Heart right ventricle (tissue), 16 donors: ENCODE measurements at regions of chr15 and their contacts with region 1.

Region 1: GRCh38 chr15:85380217-85380811 is at the start of gene AKAP13:
- DNase-seq: peak; percentile 97 to 98
- ATAC-seq: peak; percentile 90 to 98 (median 95)
- H3K4me3 ChIP-seq: peak within 1 kb of the TSS; percentile 80 to 97 (median 92)
- H3K27ac ChIP-seq: peak within 1 kb of the TSS; percentile 91 to 96 (median 94)
- H3K4me1 ChIP-seq: peaks cover 0 to 48% (median 28%) of the 10 kb centered on the region in 9 donors
- H3K27me3 ChIP-seq: no peaks in the 10 kb centered on the region
- CTCF ChIP-seq: no peak
- total RNA-seq, gene AKAP13: 325 to 645 (median 537) TPM

Region 2: GRCh38 chr15:85337425-85338074 is 42.8 kb before region 1 on chr15:
- intact Hi-C with region 1: loop called in 3 of 10 experiments (anchors 5 kb)
- DNase-seq: peak in 1 of 2 donors; percentile 48
- ATAC-seq: peak; percentile 13 to 76 (median 50)
- H3K4me3 ChIP-seq: peak overlapping the region in 2 of 10 donors; percentile 8 to 9
- H3K27ac ChIP-seq: peak overlapping the region; percentile 59 to 93 (median 87)
- H3K4me1 ChIP-seq: peaks cover 18 to 58% (median 45%) of the 10 kb centered on the region in 9 donors
- H3K27me3 ChIP-seq: no peaks in the 10 kb centered on the region
- CTCF ChIP-seq: no peak

Region 3: DNA sequence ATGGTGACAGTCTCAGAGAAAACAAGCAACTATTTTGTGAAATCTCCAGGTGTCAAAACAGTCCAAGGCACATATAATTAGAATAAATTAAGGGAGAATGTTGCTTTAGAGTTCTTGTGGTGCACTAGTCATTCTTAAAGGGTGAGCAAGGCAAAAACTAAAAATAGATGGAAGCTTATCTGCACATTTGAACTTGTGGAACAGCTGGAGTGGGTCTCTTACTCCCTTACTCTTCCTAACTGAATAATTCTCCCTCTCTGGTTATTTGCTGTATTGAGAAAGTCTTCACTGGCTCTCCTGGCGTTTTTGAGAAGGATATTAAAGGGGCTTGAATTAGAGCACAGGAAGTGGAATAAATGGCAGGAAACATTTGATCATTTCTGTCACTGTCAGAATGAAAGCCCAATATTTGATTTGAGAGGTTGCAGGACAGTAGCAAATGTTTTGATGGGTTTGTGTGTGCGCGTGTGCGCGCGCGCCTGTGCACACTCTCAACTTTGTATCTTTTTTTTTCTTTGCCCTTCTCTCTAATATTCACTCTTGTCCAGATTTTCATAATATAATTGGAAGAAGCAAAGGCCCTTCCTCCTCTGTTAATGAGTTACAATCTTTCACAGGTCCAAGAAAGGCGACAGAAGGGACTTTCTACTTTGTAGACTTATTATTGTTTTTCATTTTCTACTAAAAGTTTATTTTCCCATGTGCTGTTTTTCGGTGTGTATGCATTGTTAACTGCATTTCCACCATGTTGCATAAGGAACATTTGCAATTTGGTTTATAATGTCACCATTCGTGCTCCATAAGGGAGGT is 41.0 kb after region 1 on chr15:
- intact Hi-C with region 1: no loop called
- DNase-seq: no peak
- ATAC-seq: peak; percentile 26 to 70 (median 66)
- H3K4me3 ChIP-seq: no peak overlapping the region
- H3K27ac ChIP-seq: peak overlapping the region in 8 of 10 donors; percentile 1 to 64 (median 50)
- H3K4me1 ChIP-seq: peaks cover 4 to 94% (median 62%) of the 10 kb centered on the region in 9 donors
- H3K27me3 ChIP-seq: no peaks in the 10 kb centered on the region
- CTCF ChIP-seq: no peak

Region 4: DNA sequence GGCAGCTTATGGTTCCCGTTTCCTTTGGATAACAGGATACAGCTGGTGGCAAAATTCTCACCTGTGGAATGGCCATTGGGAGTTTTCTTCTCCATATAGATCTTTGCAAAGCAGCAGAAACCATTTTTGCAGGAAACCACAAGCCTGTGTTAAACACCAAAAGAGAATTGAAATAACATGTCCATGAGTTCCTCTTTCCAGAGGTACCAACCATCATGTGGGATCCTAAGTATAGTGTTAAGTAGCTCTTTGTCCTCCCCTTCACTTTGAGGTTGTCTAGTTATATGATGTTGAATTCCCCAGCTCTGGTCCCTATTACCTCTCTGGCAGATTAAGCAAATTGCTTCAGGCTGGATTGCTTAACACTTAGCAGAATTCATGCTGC is 95.0 kb after region 1 on chr15:
- intact Hi-C with region 1: loop called in 1 of 10 experiments (anchors 10 kb)
- DNase-seq: no peak
- ATAC-seq: peak in 2 of 8 donors; percentile 6 to 7
- H3K4me3 ChIP-seq: no peak overlapping the region
- H3K27ac ChIP-seq: peak overlapping the region in 2 of 10 donors; percentile 9 to 11
- H3K4me1 ChIP-seq: peaks cover 25 to 98% (median 85%) of the 10 kb centered on the region in 9 donors
- H3K27me3 ChIP-seq: no peaks in the 10 kb centered on the region
- CTCF ChIP-seq: no peak